PC-3 (cell line): ENCODE measurements at regions of chr11 and their contacts with region 1.

Region 1: GRCh38 chr11:12056123-12056522 is 47.7 kb upstream of the DKK3 start:
- DNase-seq: no peak
- ATAC-seq: no peak
- H3K4me3 ChIP-seq: no peak overlapping the region
- H3K27ac ChIP-seq: no peak overlapping the region
- H3K4me1 ChIP-seq: no peaks in the 10 kb centered on the region
- H3K27me3 ChIP-seq: no peaks in the 10 kb centered on the region
- CTCF ChIP-seq: peak; percentile 41; the same call in 1 of the 2 replicates

Region 2: GRCh38 chr11:11672789-11673188 is 383.3 kb before region 1 on chr11:
- CTCF ChIA-PET with region 1: no interaction called
- POLR2A ChIA-PET with region 1: no interaction called
- intact Hi-C with region 1: no loop called
- DNase-seq: no peak
- ATAC-seq: no peak
- H3K4me3 ChIP-seq: no peak overlapping the region
- H3K27ac ChIP-seq: no peak overlapping the region
- H3K4me1 ChIP-seq: no peaks in the 10 kb centered on the region
- H3K27me3 ChIP-seq: peaks cover 32% of the 10 kb centered on the region
- CTCF ChIP-seq: no peak

Region 3: DNA sequence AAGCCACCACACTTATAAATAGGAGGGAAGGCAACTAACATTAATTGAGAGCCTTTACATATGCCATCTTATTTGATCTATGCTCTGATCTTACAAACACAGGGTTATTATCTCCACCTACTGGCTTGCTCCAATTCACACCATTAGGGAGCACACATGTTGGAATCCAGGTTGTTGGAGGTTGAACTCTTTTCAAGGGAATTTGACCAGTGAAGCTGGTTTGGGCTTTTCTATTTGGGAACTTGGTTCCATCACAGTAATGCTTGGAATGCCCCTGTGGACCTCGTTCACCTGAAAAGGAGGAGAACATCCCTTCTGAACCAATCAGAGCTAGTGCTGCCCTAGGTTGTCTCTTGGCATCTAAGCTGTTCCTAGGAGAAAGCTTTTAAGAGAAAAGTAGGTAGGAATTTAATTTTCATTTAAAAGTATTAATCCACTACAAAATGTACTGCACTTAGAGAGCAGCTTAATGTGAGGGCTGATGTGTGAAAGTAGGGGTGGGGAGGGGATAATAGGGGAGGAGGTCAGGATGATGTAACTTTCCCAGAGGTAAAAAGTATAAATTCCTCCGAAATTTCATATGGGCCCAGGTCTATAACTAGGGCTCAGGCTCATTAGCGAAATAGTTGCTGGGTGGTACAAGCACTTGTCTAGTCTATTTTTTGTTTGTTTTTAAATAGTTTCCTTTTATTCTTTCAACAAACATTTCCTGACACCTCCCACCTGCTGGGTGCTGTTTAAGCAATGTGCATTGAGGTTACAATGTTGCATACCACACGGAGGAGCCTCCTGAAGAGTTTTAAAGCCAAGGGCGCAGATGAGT is 46.7 kb after region 1 on chr11:
- CTCF ChIA-PET with region 1: no interaction called
- POLR2A ChIA-PET with region 1: no interaction called
- intact Hi-C with region 1: loop called (anchors 1 kb)
- DNase-seq: peak; percentile 29
- ATAC-seq: peak; percentile 62
- H3K4me3 ChIP-seq: no peak overlapping the region
- H3K27ac ChIP-seq: no peak overlapping the region
- H3K4me1 ChIP-seq: no peaks in the 10 kb centered on the region
- H3K27me3 ChIP-seq: no peaks in the 10 kb centered on the region
- CTCF ChIP-seq: peak; percentile 43